ENCODE measurements at regions of chr3 and their contacts with region 1.

Region 1: GRCh38 chr3:46469680-46470357 is 5.1 kb upstream of the LTF start:
- DNase-seq: peak in 4 of 6 donors; percentile 55 to 82 (median 66)
- ATAC-seq: peak; percentile 37 to 84 (median 76)
- H3K4me3 ChIP-seq: no peak overlapping the region
- H3K27ac ChIP-seq: peak overlapping the region in 2 of 4 donors; percentile 80 to 82
- H3K4me1 ChIP-seq: peaks cover 0 to 38% (median 0%) of the 10 kb centered on the region in 3 donors
- H3K27me3 ChIP-seq: no peaks in the 10 kb centered on the region
- CTCF ChIP-seq: no peak

Region 2: GRCh38 chr3:46325645-46326585 is 143.9 kb before region 1 on chr3:
- intact Hi-C with region 1: no loop called
- DNase-seq: no peak
- ATAC-seq: no peak
- H3K4me3 ChIP-seq: no peak overlapping the region
- H3K27ac ChIP-seq: no peak overlapping the region
- H3K4me1 ChIP-seq: no peaks in the 10 kb centered on the region
- H3K27me3 ChIP-seq: no peaks in the 10 kb centered on the region
- CTCF ChIP-seq: no peak

Region 3: DNA sequence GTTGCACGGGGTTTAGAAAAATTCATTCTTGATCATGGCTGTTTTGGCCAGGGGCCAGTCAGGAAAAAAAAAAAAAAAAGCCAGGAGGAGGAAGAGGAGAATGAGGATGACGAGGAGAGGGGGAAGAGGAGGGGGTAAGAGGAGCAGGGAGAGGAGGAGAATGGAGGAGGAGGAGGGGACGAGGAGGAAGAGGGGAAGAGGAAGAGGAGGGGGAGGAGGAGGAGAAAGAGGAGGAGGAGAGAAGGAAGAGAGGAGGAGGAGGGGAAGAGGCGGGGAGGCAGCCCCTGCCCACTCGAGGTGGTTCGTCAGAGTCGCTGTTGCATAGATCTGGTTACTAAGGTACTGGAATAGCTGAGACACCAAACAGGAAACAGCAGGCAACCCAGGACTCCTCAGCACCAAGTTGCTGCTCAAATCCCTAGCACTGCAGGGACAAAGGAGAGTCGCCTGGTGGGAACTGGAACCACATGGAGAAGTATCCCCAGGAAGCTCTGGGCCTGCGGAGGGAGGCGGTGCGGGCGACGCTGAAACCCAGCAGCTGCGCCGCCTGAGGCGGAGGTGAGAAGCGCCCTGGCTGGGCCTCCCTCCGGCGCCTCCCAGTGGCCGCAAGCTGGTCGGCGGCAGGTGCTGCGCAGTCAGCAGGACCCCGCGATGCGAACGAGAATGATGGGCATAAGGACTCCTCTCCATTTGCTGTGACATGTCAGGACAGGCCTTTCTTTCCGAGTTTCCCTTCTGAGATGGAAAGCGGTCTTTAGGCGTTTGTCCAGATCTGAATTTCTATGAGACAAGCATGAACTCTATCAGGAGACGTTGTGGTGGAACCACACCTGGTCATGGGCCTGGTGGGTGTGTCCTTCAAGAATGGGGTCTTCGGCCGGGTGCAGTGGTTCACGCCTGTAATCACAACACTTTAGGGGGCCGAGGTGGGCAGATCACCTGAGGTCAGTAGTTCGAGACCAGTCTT is 160.0 kb after region 1 on chr3:
- intact Hi-C with region 1: no loop called
- DNase-seq: peak; percentile 72 to 94 (median 84)
- ATAC-seq: peak; percentile 98 to 100 (median 99)
- H3K4me3 ChIP-seq: peak overlapping the region in 1 of 4 donors; percentile 20
- H3K27ac ChIP-seq: peak overlapping the region in 2 of 4 donors; percentile 33 to 43
- H3K4me1 ChIP-seq: peaks cover 0 to 3% (median 0%) of the 10 kb centered on the region in 3 donors
- H3K27me3 ChIP-seq: no peaks in the 10 kb centered on the region
- CTCF ChIP-seq: peak; percentile 80 to 99 (median 96)

Region 4: GRCh38 chr3:46895204-46895660 is 425.4 kb after region 1 on chr3:
- intact Hi-C with region 1: loop called in 1 of 3 experiments (anchors 10 kb)
- DNase-seq: peak; percentile 50 to 90 (median 74)
- ATAC-seq: peak; percentile 53 to 72 (median 66)
- H3K4me3 ChIP-seq: no peak overlapping the region
- H3K27ac ChIP-seq: no peak overlapping the region
- H3K4me1 ChIP-seq: peaks cover 0 to 3% (median 0%) of the 10 kb centered on the region in 3 donors
- H3K27me3 ChIP-seq: peaks cover 0 to 4% (median 0%) of the 10 kb centered on the region in 4 donors
- CTCF ChIP-seq: peak; percentile 52 to 78 (median 63)

Measured in pancreas (tissue), 10 donors.